Brain microvascular endothelial cell (primary cell): ENCODE measurements at regions of chr5 and their contacts with region 1.

Region 1: GRCh38 chr5:73448463-73449136 is at the start of gene FOXD1:
- DNase-seq: peak; percentile 95
- H3K4me3 ChIP-seq: peak within 1 kb of the TSS; percentile 67
- H3K27ac ChIP-seq: peak within 1 kb of the TSS; percentile 88
- H3K27me3 ChIP-seq: no peaks in the 10 kb centered on the region
- CTCF ChIP-seq: no peak

Region 2: GRCh38 chr5:73312146-73312871 is 136.3 kb before region 1 on chr5:
- in situ Hi-C with region 1: loop called (anchors 25 kb)
- DNase-seq: peak; percentile 98
- H3K4me3 ChIP-seq: no peak overlapping the region
- H3K27ac ChIP-seq: peak overlapping the region; percentile 91
- H3K27me3 ChIP-seq: no peaks in the 10 kb centered on the region
- CTCF ChIP-seq: peak; percentile 86